K562 (cell line): ENCODE measurements at regions of chrX and their contacts with region 1.

Region 1: GRCh38 chrX:9352694-9353411 is 112.0 kb upstream of the TBL1X start:
- DNase-seq: peak; percentile 36 to 91 (median 53)
- ATAC-seq: peak; percentile 88
- H3K4me3 ChIP-seq: peak overlapping the region; percentile 24; the same call in 1 of the 2 replicates
- H3K27ac ChIP-seq: peak overlapping the region; percentile 95
- H3K4me1 ChIP-seq: peaks cover 18 to 33% of the 10 kb centered on the region in 2 experiments; a peak in 4 of 5 replicates
- H3K27me3 ChIP-seq: no peaks in the 10 kb centered on the region
- CTCF ChIP-seq: no peak
- EP300 ChIP-seq: peak; percentile 82
- POLR2A ChIP-seq: no peak
- RAD21 ChIP-seq: no peak

Region 2: GRCh38 chrX:8971116-8971515 is 381.7 kb before region 1 on chrX:
- CTCF ChIA-PET with region 1: no interaction called
- POLR2A ChIA-PET with region 1: no interaction called
- in situ Hi-C with region 1: no loop called
- intact Hi-C with region 1: loop called (anchors 5 kb)
- DNase-seq: peak in 2 of 4 experiments; percentile 6 to 30
- ATAC-seq: peak; percentile 77
- H3K4me3 ChIP-seq: no peak overlapping the region
- H3K27ac ChIP-seq: no peak overlapping the region
- H3K4me1 ChIP-seq: no peaks in the 10 kb centered on the region
- H3K27me3 ChIP-seq: no peaks in the 10 kb centered on the region
- CTCF ChIP-seq: peak; percentile 7 to 35 (median 10); a peak in 2 of 6 replicates
- EP300 ChIP-seq: no peak
- POLR2A ChIP-seq: no peak
- RAD21 ChIP-seq: peak in 1 of 2 experiments; percentile 54; a peak in 3 of 4 replicates

Region 3: GRCh38 chrX:9341291-9342201 is 11.3 kb before region 1 on chrX:
- CTCF ChIA-PET with region 1: no interaction called
- POLR2A ChIA-PET with region 1: interaction called, 3 read pairs
- in situ Hi-C with region 1: no loop called
- intact Hi-C with region 1: loop called (anchors 1 kb)
- DNase-seq: peak; percentile 57 to 72 (median 60)
- ATAC-seq: peak; percentile 38
- H3K4me3 ChIP-seq: no peak overlapping the region
- H3K27ac ChIP-seq: peak overlapping the region; percentile 79
- H3K4me1 ChIP-seq: peaks cover 11 to 26% of the 10 kb centered on the region in 2 experiments
- H3K27me3 ChIP-seq: no peaks in the 10 kb centered on the region
- CTCF ChIP-seq: no peak
- EP300 ChIP-seq: no peak
- POLR2A ChIP-seq: no peak
- RAD21 ChIP-seq: no peak

Region 4: GRCh38 chrX:9416632-9417319 is 63.9 kb after region 1 on chrX:
- CTCF ChIA-PET with region 1: no interaction called
- POLR2A ChIA-PET with region 1: no interaction called
- in situ Hi-C with region 1: no loop called
- intact Hi-C with region 1: loop called (anchors 2 kb)
- DNase-seq: no peak
- ATAC-seq: no peak
- H3K4me3 ChIP-seq: no peak overlapping the region
- H3K27ac ChIP-seq: no peak overlapping the region
- H3K4me1 ChIP-seq: peaks cover 6 to 9% of the 10 kb centered on the region in 2 experiments; a peak in 2 of 5 replicates
- H3K27me3 ChIP-seq: no peaks in the 10 kb centered on the region
- CTCF ChIP-seq: no peak
- EP300 ChIP-seq: no peak
- POLR2A ChIP-seq: no peak
- RAD21 ChIP-seq: no peak

Region 5: DNA sequence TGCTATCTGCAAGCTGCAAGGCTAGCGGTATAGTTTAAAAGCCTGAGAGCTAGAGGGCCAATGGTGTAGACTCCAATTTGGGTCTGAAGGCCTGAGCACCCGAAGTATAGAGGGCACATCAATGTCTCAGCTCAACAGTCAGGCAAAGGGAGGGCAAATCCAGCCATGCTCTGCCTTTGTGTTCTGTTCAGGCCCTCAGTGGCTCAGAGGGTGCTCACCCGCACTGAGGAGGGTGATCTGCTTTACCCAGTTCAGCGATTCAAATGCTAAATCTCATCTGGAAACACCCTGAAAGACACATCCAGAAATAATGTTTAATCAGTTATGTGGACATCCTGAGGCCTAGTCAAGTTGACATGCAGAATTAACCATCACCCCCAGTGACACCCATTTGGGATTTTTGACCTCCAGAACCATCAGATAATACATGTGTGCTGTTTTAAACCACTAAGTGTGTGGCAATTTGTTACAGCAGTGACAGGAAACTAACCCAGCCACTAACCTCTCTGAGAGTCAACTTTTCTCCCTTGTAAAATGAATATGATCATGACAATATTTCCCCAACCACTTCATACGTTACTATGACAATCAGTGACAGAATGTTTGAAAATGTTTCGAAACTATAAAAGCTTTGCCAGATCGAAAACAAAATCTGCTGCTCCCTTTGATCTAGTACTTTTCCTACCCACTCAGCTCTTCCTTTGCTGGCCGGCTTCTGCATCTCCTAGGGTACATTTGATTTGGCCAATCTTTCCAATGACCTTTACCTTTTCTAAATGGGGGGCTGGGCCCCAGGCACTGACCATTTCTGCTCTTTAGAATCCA is 103.6 kb after region 1 on chrX:
- CTCF ChIA-PET with region 1: no interaction called
- POLR2A ChIA-PET with region 1: no interaction called
- in situ Hi-C with region 1: loop called (anchors 5 kb)
- intact Hi-C with region 1: no loop called
- DNase-seq: no peak
- ATAC-seq: no peak; the same call in 2 of the 3 replicates
- H3K4me3 ChIP-seq: no peak overlapping the region
- H3K27ac ChIP-seq: no peak overlapping the region
- H3K4me1 ChIP-seq: peaks cover 6 to 21% of the 10 kb centered on the region in 2 experiments; a peak in 4 of 5 replicates
- H3K27me3 ChIP-seq: no peaks in the 10 kb centered on the region
- CTCF ChIP-seq: no peak
- EP300 ChIP-seq: no peak
- POLR2A ChIP-seq: no peak
- RAD21 ChIP-seq: no peak

Region 6: DNA sequence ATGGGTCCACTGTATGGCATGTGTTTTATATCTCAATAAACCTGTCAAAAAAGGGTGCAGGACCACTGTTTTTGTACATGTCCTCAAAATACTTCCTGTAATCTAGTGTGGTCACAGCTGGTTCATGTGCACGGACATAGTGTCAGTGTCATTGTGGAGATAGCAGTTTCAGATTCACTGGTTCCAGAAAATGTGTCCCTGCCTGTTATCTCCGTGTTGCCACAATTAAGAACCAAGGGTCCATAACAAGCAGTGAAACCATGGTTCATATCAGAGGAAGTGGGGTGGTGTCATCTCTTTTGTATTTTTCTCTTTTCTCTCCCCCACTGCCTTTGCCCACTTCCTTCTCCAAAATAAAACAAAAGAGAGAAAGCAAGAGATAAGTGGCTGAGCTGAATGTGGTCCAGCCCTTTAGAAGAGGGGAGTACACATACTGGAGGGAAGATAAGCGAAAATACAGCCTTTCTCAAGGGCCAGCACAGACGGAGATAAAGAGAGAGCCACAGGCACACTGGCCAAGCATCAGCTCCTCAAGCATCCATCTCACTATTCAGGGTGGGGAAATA is 163.2 kb after region 1 on chrX:
- CTCF ChIA-PET with region 1: no interaction called
- POLR2A ChIA-PET with region 1: no interaction called
- in situ Hi-C with region 1: no loop called
- intact Hi-C with region 1: loop called (anchors 5 kb)
- DNase-seq: peak; percentile 47 to 88 (median 63)
- ATAC-seq: peak; percentile 93
- H3K4me3 ChIP-seq: no peak overlapping the region
- H3K27ac ChIP-seq: peak overlapping the region; percentile 64
- H3K4me1 ChIP-seq: peaks cover 21 to 59% of the 10 kb centered on the region in 2 experiments; a peak in 4 of 5 replicates
- H3K27me3 ChIP-seq: no peaks in the 10 kb centered on the region
- CTCF ChIP-seq: no peak
- EP300 ChIP-seq: peak; percentile 80; the same call in 1 of the 2 replicates
- POLR2A ChIP-seq: no peak
- RAD21 ChIP-seq: no peak

Region 7: DNA sequence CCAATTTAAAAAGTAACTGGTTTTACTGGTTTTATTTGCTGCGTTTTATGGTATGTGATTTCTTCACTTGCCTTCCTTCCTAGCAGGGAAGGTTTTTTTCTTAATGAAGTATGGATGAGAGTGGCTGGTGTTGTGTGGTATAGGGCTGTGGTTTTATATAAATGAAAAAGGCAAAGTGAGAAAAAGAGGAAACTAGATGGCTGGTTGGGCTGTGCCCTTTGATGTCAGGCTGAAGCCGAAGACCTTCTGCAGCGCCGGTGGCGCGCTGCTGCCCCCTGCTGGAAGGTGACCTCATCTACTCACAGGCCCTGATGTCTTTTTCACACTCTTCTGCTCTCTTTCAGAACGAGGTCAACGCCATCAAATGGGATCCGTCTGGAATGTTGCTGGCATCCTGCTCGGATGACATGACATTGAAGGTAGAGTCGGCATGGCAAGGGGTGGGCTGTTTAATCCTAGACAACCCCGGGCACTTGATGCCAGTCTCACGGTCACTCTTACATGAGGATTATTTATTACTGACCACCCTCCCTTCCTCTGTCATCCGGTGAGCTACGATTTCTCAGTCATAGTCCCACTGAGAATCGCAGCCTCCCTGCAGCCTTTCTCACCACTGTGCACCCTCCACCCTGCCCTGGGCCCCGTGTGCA is 356.2 kb after region 1 on chrX:
- CTCF ChIA-PET with region 1: no interaction called
- POLR2A ChIA-PET with region 1: no interaction called
- in situ Hi-C with region 1: no loop called
- intact Hi-C with region 1: loop called (anchors 5 kb)
- DNase-seq: peak; percentile 63 to 80 (median 66)
- ATAC-seq: peak; percentile 97
- H3K4me3 ChIP-seq: no peak overlapping the region
- H3K27ac ChIP-seq: no peak overlapping the region
- H3K4me1 ChIP-seq: no peaks in the 10 kb centered on the region
- H3K27me3 ChIP-seq: no peaks in the 10 kb centered on the region
- CTCF ChIP-seq: peak; percentile 68 to 79 (median 73)
- EP300 ChIP-seq: no peak
- POLR2A ChIP-seq: no peak
- RAD21 ChIP-seq: peak; percentile 70 to 76